Activated CD8-positive, alpha-beta T cell treated with anti-CD3 and anti-CD28 coated beads for 36 hours (primary cell): ENCODE measurements at regions of chr15 and their contacts with region 1.

Region 1: GRCh38 chr15:68252925-68253534 is 23.5 kb upstream of the CLN6 start:
- DNase-seq: peak; percentile 66
- ATAC-seq: peak; percentile 77
- H3K4me3 Mint-ChIP-seq: no peak overlapping the region
- H3K27ac Mint-ChIP-seq: no peak overlapping the region
- H3K4me1 Mint-ChIP-seq: no peaks in the 10 kb centered on the region
- H3K27me3 Mint-ChIP-seq: peaks cover 3% of the 10 kb centered on the region
- CTCF ChIP-seq: peak; percentile 82

Region 2: DNA sequence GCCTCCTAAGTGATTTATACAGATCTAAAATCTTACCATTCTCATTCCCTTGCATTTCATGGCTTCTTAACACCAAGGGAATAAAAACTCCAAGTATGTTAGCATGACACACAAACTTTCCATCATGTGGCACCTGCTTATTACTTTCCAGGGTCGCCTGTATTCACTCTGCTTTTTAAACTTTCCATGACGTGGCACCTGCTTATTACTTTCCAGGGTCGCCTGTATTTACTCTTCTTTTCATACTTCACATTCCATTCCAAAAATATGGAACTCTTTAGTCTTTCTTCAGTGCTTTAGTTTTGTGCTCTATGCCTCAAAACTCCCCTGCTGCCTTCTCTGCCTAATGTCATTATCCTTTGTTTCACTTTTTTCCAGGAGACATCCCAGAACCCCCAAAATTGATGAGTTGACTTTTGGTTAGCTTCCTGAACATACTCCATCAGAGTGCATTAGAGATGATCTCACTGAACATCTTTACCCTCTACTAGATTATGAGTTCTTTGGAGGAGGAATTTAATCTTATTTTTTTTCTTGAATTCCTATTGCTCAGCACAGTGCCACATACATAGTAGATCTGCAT is 94.9 kb before region 1 on chr15:
- CTCF ChIA-PET with region 1: no interaction called
- POLR2A ChIA-PET with region 1: no interaction called
- intact Hi-C with region 1: no loop called
- DNase-seq: no peak
- ATAC-seq: no peak
- H3K4me3 Mint-ChIP-seq: no peak overlapping the region
- H3K27ac Mint-ChIP-seq: no peak overlapping the region
- H3K4me1 Mint-ChIP-seq: no peaks in the 10 kb centered on the region
- H3K27me3 Mint-ChIP-seq: no peaks in the 10 kb centered on the region
- CTCF ChIP-seq: no peak

Region 3: GRCh38 chr15:68235022-68235421 is 18.0 kb before region 1 on chr15:
- CTCF ChIA-PET with region 1: interaction called, 14 read pairs
- POLR2A ChIA-PET with region 1: interaction called, 4 read pairs
- intact Hi-C with region 1: no loop called
- DNase-seq: no peak
- ATAC-seq: no peak
- H3K4me3 Mint-ChIP-seq: no peak overlapping the region
- H3K27ac Mint-ChIP-seq: no peak overlapping the region
- H3K4me1 Mint-ChIP-seq: peaks cover 9% of the 10 kb centered on the region
- H3K27me3 Mint-ChIP-seq: peaks cover 2% of the 10 kb centered on the region
- CTCF ChIP-seq: no peak

Region 4: GRCh38 chr15:68277603-68278344 is 24.7 kb after region 1 on chr15 and contains the start of gene FEM1B:
- CTCF ChIA-PET with region 1: interaction called, 41 read pairs
- POLR2A ChIA-PET with region 1: interaction called, 8 read pairs
- intact Hi-C with region 1: no loop called
- DNase-seq: peak; percentile 90
- ATAC-seq: peak; percentile 81
- H3K4me3 Mint-ChIP-seq: peak within 1 kb of the TSS; percentile 93
- H3K27ac Mint-ChIP-seq: peak within 1 kb of the TSS; percentile 98
- H3K4me1 Mint-ChIP-seq: peaks cover 38% of the 10 kb centered on the region
- H3K27me3 Mint-ChIP-seq: no peaks in the 10 kb centered on the region
- CTCF ChIP-seq: no peak
- total RNA-seq, gene FEM1B: 37.1 to 44.4 TPM

Region 5: GRCh38 chr15:68298882-68299381 is 45.9 kb after region 1 on chr15:
- CTCF ChIA-PET with region 1: interaction called, 85 read pairs
- POLR2A ChIA-PET with region 1: interaction called, 3 read pairs
- intact Hi-C with region 1: loop called (anchors 5 kb)
- DNase-seq: peak; percentile 36
- ATAC-seq: peak; percentile 91
- H3K4me3 Mint-ChIP-seq: peak overlapping the region; percentile 71
- H3K27ac Mint-ChIP-seq: peak overlapping the region; percentile 91
- H3K4me1 Mint-ChIP-seq: peaks cover 32% of the 10 kb centered on the region
- H3K27me3 Mint-ChIP-seq: no peaks in the 10 kb centered on the region
- CTCF ChIP-seq: no peak

Region 6: DNA sequence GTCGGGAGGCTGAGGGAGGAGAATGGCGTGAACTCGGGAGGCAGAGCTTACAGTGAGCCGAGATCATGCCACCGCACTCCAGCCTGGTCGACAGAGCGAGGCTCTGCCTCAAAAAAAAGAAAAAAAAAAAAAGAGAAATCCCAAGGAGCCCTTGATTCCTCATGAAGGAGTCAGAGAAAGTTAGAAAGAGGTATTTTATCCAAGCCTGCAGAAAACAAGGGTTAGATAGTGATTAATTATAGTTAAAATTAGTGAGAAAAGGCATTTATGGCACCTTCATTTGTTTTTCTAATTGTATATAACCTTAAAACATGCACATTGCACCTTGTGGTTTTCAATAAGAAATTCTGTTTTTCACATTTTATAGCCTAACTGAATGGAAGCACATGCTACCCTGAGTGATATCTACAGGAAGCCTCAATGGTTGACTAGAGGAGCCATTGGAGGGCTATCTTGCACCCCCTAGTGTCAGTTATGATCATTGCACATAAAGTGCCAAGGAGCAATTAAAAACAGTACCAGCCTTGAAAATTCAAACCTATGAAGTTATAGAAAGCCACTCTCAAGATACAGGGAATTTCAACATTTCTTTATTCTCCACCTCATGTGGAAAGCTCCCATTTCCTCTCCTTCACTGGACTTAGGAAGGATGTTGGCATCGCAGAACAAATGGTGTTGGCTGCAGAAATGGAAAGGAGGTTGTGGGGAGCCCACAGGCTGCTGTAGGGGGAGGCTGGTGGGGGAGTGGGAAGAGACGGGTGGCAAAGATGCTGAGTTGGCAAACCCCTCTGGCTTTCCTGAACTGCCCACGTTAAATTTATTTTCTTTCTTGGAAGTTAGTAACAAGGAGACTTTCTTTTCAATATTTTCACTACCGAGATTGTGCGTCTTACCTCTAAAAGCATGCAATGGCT is 130.4 kb after region 1 on chr15:
- CTCF ChIA-PET with region 1: interaction called, 8 read pairs
- POLR2A ChIA-PET with region 1: no interaction called
- intact Hi-C with region 1: loop called (anchors 5 kb)
- DNase-seq: peak; percentile 58
- ATAC-seq: peak; percentile 91
- H3K4me3 Mint-ChIP-seq: no peak overlapping the region
- H3K27ac Mint-ChIP-seq: no peak overlapping the region
- H3K4me1 Mint-ChIP-seq: peaks cover 8% of the 10 kb centered on the region
- H3K27me3 Mint-ChIP-seq: no peaks in the 10 kb centered on the region
- CTCF ChIP-seq: peak; percentile 76

Region 7: DNA sequence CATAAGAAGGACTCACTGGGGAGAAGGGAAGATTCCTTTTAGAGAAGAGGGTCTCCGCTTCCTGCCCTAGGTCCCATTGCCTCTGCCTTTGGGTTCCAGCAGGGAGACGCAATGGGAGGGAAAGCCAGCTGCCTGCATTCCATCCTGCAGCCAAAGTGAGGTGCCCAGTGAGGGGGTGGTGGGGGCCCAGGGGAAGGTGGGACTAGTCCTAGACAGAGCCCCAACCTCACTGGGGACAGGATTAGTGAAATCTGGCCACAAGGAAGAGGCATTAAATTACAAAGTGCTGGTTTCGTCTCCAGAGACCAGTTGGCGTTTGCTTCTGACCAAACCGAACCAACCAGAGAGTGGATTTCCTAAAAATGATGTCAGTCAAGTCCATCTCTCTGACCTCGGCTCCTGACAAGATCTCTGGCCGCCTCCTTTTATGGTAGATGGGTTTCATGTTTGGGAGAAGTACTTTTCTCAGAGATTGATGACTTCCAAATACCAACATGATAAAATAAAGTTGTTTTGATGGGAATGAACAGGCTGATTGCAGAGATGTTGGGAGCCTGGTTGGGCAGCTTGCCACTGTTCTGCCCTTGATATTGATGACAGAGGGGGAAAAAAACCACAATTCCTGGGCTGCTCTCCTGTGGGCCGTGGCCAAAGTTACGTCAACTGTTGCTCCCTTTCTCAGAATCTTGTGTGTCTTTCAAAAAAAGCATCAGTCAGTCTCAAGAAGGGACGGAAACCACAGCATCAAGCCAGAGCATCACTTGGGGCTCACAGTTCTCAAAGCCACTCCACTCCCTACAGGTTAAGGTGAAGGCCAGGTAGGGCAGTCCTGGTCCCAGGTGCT is 154.2 kb after region 1 on chr15:
- CTCF ChIA-PET with region 1: no interaction called
- POLR2A ChIA-PET with region 1: no interaction called
- intact Hi-C with region 1: no loop called
- DNase-seq: no peak
- ATAC-seq: no peak
- H3K4me3 Mint-ChIP-seq: no peak overlapping the region
- H3K27ac Mint-ChIP-seq: no peak overlapping the region
- H3K4me1 Mint-ChIP-seq: no peaks in the 10 kb centered on the region
- H3K27me3 Mint-ChIP-seq: no peaks in the 10 kb centered on the region
- CTCF ChIP-seq: no peak

Region 8: GRCh38 chr15:68503791-68504680 is 251.0 kb after region 1 on chr15:
- CTCF ChIA-PET with region 1: no interaction called
- POLR2A ChIA-PET with region 1: no interaction called
- intact Hi-C with region 1: no loop called
- DNase-seq: no peak
- ATAC-seq: no peak
- H3K4me3 Mint-ChIP-seq: no peak overlapping the region
- H3K27ac Mint-ChIP-seq: no peak overlapping the region
- H3K4me1 Mint-ChIP-seq: peaks cover 6% of the 10 kb centered on the region
- H3K27me3 Mint-ChIP-seq: no peaks in the 10 kb centered on the region
- CTCF ChIP-seq: no peak